Activated B cell treated with CpG ODN at 0.5 μM for 24 hours (primary cell): ENCODE measurements at regions of chr11 and their contacts with region 1.

Region 1: DNA sequence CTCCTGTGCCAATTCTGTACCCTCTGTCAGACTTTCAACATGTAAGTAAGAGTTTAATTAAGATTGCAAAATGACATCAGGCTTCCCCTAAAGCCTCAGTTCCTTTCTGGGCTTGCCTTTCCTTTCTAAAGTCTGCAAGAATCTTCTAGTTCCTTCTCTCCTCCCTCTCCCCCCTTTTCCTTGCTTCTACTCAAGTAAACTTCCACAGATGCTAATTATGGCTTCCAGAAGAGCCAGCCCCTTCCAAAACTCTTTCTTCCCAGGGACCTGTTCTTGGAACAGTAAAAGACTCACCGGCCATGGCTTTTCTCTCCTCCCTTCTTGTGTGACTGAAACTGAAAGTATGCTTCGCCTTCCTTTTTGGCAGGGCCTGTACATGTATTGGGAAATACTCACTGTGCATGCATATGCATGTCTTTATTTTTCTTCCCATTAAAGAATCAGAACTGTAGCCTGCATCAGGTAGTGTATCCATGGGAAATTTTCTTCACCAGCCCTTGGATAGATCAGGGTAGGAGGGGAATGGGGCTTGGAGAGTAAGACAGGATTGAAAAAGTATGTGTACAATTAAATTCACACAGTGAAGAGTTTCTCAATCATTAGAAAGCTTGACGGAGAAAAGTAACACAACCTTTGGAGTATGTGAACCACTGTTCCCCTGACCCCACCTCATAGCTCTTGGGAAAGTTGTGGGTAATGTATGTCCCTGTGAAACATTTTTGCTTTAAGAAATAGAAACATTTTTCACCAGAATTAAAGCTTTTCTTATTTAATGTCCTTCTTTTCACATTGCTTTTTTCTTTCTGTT is at the start of gene CASP1:
- DNase-seq: no peak
- ATAC-seq: peak; percentile 82
- H3K4me3 Mint-ChIP-seq: peak within 1 kb of the TSS; percentile 94
- H3K27ac Mint-ChIP-seq: peak within 1 kb of the TSS; percentile 95
- H3K4me1 Mint-ChIP-seq: peaks cover 43% of the 10 kb centered on the region
- H3K27me3 Mint-ChIP-seq: no peaks in the 10 kb centered on the region
- CTCF ChIP-seq: no peak
- total RNA-seq, gene CASP1: 35.7 and 47.0 TPM in 2 replicates

Region 2: GRCh38 chr11:104968355-104968855 is 66.6 kb before region 1 on chr11 and contains the start of gene CASP4:
- CTCF ChIA-PET with region 1: no interaction called
- POLR2A ChIA-PET with region 1: no interaction called
- intact Hi-C with region 1: loop called (anchors 5 kb)
- DNase-seq: no peak
- ATAC-seq: peak; percentile 85
- H3K4me3 Mint-ChIP-seq: peak within 1 kb of the TSS; percentile 94
- H3K27ac Mint-ChIP-seq: peak within 1 kb of the TSS; percentile 94
- H3K4me1 Mint-ChIP-seq: peaks cover 41% of the 10 kb centered on the region
- H3K27me3 Mint-ChIP-seq: no peaks in the 10 kb centered on the region
- CTCF ChIP-seq: no peak
- total RNA-seq, gene CASP4: 87.8 and 88.7 TPM in 2 replicates

Region 3: GRCh38 chr11:104984808-104985207 is 50.2 kb before region 1 on chr11:
- CTCF ChIA-PET with region 1: no interaction called
- POLR2A ChIA-PET with region 1: no interaction called
- intact Hi-C with region 1: no loop called
- DNase-seq: no peak
- ATAC-seq: no peak
- H3K4me3 Mint-ChIP-seq: no peak overlapping the region
- H3K27ac Mint-ChIP-seq: no peak overlapping the region
- H3K4me1 Mint-ChIP-seq: no peaks in the 10 kb centered on the region
- H3K27me3 Mint-ChIP-seq: no peaks in the 10 kb centered on the region
- CTCF ChIP-seq: no peak

Region 4: DNA sequence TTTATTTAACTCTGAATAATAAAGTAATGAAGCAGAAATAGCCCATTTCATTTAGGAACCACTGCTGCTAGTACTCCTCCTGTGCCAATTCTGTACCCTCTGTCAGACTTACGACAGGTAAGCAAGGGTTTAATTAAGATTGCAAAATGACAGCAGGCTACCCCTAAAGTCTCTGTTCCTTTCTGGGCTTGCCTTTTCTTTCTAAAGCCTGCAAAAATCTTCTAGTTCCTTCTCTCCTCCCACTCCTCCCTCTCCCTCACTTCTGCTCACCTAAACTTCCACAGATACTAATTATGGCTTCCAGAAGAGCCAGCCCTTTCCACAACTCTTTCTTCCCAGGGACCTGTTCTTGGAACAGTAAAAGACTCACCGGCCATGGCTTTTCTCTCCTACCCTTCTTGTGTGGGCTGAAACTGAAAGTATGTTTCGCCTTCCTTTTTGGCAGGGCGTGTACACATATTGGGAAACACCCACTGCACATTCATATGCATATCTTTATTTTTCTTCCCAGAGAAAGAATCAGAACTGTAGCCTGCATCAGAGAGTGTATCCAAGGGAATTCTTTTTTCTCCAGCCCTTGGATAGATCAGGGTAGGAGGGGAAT is 10.0 kb after region 1 on chr11 and contains the start of gene CARD16:
- CTCF ChIA-PET with region 1: no interaction called
- POLR2A ChIA-PET with region 1: no interaction called
- intact Hi-C with region 1: loop called (anchors 1 kb)
- DNase-seq: no peak
- ATAC-seq: peak; percentile 94
- H3K4me3 Mint-ChIP-seq: peak within 1 kb of the TSS; percentile 94
- H3K27ac Mint-ChIP-seq: peak within 1 kb of the TSS; percentile 95
- H3K4me1 Mint-ChIP-seq: peaks cover 49% of the 10 kb centered on the region
- H3K27me3 Mint-ChIP-seq: no peaks in the 10 kb centered on the region
- CTCF ChIP-seq: no peak
- total RNA-seq, gene CARD16: 31.5 and 33.1 TPM in 2 replicates